ENCODE measurements at regions of chr12 and their contacts with region 1.

Region 1: DNA sequence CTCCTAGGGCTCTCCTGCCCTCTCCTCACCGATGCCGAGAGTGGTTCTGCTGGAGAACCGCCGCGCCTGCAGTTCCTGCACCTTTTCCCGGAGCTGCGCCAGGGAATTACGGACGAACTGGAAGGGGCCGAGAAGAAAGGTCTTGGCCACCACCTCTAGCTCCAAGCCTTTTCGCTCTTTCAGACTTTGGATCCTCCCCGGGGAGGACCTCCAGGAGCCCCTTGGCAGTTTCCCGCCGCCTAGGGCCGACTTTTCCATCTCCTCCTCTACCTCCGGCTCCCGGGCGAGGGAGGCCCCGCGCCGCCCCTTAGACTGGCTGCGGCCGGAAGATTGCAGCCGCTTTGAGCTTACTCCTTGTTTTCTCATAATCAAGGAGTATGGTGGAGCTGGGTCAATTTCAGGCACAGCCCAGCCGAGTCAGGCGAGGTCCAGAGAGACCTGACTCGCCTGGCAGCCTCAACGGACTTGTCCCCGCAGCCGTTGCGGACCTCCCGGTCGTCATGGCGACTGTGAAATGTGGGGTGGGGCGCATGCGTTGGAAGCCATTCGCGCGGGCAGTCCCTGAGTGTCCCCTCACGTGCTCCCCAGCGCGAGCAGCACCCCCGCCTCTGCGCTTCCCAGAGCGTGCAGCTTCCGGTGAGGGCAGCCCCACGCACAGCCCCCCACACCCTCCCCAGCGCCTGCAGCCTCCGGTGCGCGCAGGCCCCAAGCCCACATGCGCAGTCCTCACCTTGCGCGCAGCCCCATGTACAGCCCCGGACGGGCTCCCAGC is at the start of gene DPY19L2:
- DNase-seq: no peak
- ATAC-seq: peak; percentile 97
- H3K4me3 ChIP-seq: peak within 1 kb of the TSS; percentile 73 to 76
- H3K27ac ChIP-seq: peak within 1 kb of the TSS; percentile 85
- H3K4me1 ChIP-seq: no peaks in the 10 kb centered on the region
- H3K27me3 ChIP-seq: no peaks in the 10 kb centered on the region
- CTCF ChIP-seq: no peak
- total RNA-seq, gene DPY19L2: 6.6 TPM

Region 2: DNA sequence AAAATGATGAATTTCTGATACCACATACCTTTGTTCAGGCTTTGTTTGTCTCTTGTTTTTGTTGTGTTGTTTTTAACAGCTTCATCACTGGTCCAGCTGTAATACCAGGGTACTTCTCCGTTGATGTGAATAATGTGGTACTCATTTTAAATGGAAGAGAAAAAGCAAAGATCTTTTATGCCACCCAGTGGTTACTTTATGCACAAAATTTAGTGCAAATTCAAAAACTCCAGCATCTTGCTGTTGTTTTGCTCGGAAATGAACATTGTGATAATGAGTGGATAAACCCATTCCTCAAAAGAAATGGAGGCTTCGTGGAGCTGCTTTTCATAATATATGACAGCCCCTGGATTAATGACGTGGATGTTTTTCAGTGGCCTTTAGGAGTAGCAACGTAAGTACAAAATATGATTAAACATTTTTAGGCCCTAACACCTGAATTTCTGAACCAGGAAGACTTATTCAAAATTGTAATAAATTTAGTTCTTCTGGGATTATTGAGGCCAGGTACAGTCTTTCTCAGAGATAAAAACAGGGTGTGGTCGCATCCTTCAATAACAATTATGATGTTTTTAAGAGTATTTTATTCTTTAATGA is 133.9 kb after region 1 on chr12:
- CTCF ChIA-PET with region 1: no interaction called
- POLR2A ChIA-PET with region 1: no interaction called
- in situ Hi-C with region 1: no loop called
- intact Hi-C with region 1: loop called (anchors 5 kb)
- DNase-seq: no peak
- ATAC-seq: peak; percentile 72; the same call in 1 of the 2 replicates
- H3K4me3 ChIP-seq: no peak overlapping the region
- H3K27ac ChIP-seq: no peak overlapping the region
- H3K4me1 ChIP-seq: no peaks in the 10 kb centered on the region
- H3K27me3 ChIP-seq: no peaks in the 10 kb centered on the region
- CTCF ChIP-seq: peak; percentile 71; the same call in 1 of the 2 replicates

Region 3: DNA sequence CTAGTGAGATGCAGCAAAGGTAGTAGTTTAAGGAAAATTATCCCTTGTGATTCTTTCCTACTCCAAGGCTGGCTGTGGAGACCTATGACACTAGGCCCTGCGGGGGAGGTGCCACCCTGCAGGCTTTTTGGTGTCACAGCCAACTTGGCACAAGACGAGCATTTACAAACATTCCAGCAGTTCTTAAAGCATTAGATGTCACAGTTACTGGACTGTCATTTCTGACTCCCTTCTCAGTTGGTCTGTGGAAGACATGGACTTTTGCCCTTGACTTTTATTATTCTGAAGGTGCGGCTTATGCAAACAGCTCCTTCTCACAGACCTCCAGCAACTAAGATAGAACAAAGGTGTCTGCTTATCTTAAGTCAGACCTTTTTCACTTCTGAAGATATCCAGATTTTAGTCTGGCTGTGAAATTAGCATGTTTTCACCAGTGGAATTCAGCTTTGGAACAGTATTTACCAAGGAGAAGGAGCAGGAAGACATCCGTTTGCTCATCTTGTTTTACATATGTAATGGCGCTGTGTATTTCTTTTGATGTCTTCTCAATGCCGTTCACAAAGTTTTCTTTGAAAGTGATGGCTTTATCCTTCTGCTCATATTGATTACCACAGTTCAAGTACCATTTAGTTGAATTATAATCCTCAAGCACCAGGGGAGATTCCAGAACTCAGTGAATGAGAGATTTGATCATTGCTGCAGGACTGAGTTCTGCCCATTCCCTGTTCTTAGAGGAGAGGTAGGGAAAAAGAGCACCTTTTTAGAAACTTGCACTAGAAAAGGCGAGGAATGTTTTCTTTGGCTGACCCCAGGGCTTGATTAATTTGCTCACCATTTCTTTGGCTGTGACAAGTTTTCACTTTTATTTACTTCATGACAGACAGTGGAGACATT is 194.2 kb after region 1 on chr12:
- CTCF ChIA-PET with region 1: no interaction called
- POLR2A ChIA-PET with region 1: no interaction called
- in situ Hi-C with region 1: no loop called
- intact Hi-C with region 1: no loop called
- DNase-seq: peak; percentile 67
- ATAC-seq: peak; percentile 93
- H3K4me3 ChIP-seq: peak overlapping the region; percentile 8 to 43; a peak in 3 of 4 replicates
- H3K27ac ChIP-seq: peak overlapping the region; percentile 93
- H3K4me1 ChIP-seq: peaks cover 76% of the 10 kb centered on the region
- H3K27me3 ChIP-seq: no peaks in the 10 kb centered on the region
- CTCF ChIP-seq: no peak